Activated CD8-positive, alpha-beta T cell treated with anti-CD3 and anti-CD28 coated beads, Interleukin-2, amount 10 ng/mL, durations not matched to agents 7 days and 5 days (primary cell): ENCODE measurements at regions of chr7 and their contacts with region 1.

Region 1: GRCh38 chr7:129376076-129376777 is 58.0 kb upstream of the STRIP2 start:
- DNase-seq: peak; percentile 61
- ATAC-seq: peak; percentile 79
- H3K4me3 Mint-ChIP-seq: no peak overlapping the region
- H3K27ac Mint-ChIP-seq: no peak overlapping the region
- H3K4me1 Mint-ChIP-seq: peaks cover 16% of the 10 kb centered on the region
- H3K27me3 Mint-ChIP-seq: no peaks in the 10 kb centered on the region

Region 2: GRCh38 chr7:129258649-129259389 is 117.4 kb before region 1 on chr7:
- CTCF ChIA-PET with region 1: no interaction called
- POLR2A ChIA-PET with region 1: no interaction called
- DNase-seq: no peak
- ATAC-seq: peak; percentile 23
- H3K4me3 Mint-ChIP-seq: no peak overlapping the region
- H3K27ac Mint-ChIP-seq: no peak overlapping the region
- H3K4me1 Mint-ChIP-seq: peaks cover 18% of the 10 kb centered on the region
- H3K27me3 Mint-ChIP-seq: no peaks in the 10 kb centered on the region

Region 3: GRCh38 chr7:129351320-129351719 is 24.9 kb before region 1 on chr7:
- CTCF ChIA-PET with region 1: interaction called, 17 read pairs
- POLR2A ChIA-PET with region 1: no interaction called
- DNase-seq: no peak
- ATAC-seq: no peak
- H3K4me3 Mint-ChIP-seq: no peak overlapping the region
- H3K27ac Mint-ChIP-seq: no peak overlapping the region
- H3K4me1 Mint-ChIP-seq: no peaks in the 10 kb centered on the region
- H3K27me3 Mint-ChIP-seq: no peaks in the 10 kb centered on the region

Region 4: GRCh38 chr7:129389829-129390228 is 13.6 kb after region 1 on chr7:
- CTCF ChIA-PET with region 1: interaction called, 41 read pairs
- POLR2A ChIA-PET with region 1: no interaction called
- DNase-seq: no peak
- ATAC-seq: no peak
- H3K4me3 Mint-ChIP-seq: no peak overlapping the region
- H3K27ac Mint-ChIP-seq: no peak overlapping the region
- H3K4me1 Mint-ChIP-seq: no peaks in the 10 kb centered on the region
- H3K27me3 Mint-ChIP-seq: no peaks in the 10 kb centered on the region

Region 5: DNA sequence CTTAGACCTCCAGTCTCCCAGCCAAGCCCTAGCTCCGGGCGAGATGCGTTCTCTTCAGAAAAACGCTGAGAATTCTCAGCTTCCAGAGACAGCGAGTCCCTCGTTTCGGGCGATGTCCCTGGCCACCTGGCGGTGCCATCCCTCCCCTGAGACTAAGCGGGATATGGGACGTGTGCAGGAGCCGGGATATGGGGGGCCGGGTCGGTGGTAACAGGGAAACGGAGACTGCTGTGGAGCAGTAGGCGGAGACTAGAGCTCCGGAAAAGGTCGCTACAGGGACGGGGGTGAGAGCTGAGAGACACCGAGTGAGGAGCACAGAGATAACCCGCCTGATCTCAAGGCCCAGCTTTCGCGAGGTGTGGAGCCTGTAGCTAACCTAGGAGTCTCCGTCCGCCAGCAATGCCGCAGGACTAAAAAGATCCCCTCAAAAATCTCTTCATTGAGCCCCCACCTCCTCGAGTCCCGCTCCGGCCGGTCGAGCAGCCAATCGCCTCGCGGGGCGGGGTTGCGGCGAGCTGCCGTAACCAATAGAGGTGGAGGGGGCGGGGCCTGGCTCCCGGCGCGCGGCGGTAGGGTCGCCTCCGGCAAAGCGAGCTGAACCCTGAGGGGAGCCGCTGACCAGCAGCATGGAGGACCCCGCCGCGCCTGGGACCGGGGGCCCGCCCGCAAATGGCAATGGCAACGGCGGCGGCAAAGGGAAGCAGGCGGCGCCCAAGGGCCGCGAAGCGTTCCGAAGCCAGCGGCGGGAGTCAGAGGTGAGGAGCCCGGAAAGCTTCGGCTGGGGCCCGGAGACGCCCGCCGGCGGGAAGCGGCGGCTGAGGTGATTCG is 57.8 kb after region 1 on chr7 and contains the start of gene STRIP2:
- CTCF ChIA-PET with region 1: interaction called, 37 read pairs
- POLR2A ChIA-PET with region 1: no interaction called
- DNase-seq: peak; percentile 93
- ATAC-seq: peak; percentile 97
- H3K4me3 Mint-ChIP-seq: peak within 1 kb of the TSS; percentile 88
- H3K27ac Mint-ChIP-seq: peak within 1 kb of the TSS; percentile 75
- H3K4me1 Mint-ChIP-seq: peaks cover 23% of the 10 kb centered on the region
- H3K27me3 Mint-ChIP-seq: peaks cover 28% of the 10 kb centered on the region
- total RNA-seq, gene STRIP2: 6.6 to 7.1 TPM

Region 6: DNA sequence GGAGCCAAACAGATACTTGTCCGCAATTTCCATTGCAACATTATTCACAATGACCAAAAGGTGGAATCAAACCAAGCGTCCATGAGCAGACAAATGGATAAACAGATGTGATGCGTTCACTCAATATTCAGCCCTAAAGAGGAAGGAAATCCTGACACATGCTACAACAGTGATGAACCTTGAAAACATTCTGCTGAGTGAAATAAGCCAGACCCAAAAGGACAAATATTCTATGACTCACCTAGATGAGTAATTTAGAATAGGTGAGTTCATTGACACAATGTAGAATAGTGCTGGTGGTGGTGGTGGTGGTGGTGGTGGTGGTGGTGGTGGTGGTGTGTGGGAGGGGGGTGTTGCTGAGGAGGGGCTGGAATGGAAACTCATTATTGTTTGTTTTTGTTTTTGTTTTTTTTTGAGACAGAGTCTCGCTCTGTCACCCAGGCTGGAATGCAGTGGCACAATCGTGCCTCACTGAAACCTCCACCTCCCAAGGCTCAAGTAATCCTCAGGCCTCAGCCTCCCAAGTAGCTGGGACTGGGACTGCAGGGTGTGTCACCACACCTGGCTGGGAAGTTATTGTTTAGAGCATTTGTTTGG is 154.7 kb after region 1 on chr7:
- CTCF ChIA-PET with region 1: no interaction called
- POLR2A ChIA-PET with region 1: no interaction called
- DNase-seq: no peak
- ATAC-seq: peak; percentile 57
- H3K4me3 Mint-ChIP-seq: no peak overlapping the region
- H3K27ac Mint-ChIP-seq: no peak overlapping the region
- H3K4me1 Mint-ChIP-seq: peaks cover 4% of the 10 kb centered on the region
- H3K27me3 Mint-ChIP-seq: no peaks in the 10 kb centered on the region